ENCODE measurements at regions of chr14 and their contacts with region 1.

Region 1: DNA sequence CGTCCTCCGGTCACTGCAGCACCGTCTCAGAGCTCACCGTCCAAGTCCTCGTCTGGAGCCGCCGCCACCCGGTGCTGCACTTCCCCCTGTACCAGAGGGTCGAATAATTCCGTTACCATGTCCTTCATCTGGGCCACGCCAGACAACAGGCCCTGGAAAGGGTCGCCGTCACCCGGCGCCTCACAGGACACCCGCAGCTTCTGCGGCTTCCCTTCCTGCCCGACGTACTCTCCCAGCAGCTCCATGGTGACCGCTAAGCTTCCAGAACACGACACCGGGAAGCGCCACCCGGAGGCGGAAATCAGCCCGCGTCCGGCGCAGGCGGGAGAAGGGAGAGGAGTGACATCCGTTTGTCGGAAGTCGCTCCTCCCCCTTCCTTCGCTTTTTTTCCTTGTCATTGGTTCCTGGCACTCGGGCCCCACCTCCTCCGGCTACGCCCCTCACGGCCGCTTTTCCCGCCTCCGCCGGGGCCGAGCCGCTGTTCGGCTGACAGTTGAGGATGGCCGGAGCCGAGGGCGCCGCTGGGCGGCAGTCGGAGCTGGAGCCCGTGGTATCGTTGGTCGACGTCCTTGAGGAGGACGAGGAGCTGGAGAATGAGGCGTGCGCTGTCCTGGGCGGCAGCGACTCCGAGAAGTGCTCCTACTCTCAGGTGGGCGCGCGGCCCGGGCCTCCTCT is at the starts of genes GON7 and UBR7:
- DNase-seq: peak; percentile 89
- H3K4me3 ChIP-seq: peak within 1 kb of the TSS; percentile 88
- H3K27ac ChIP-seq: peak within 1 kb of the TSS; percentile 39
- H3K27me3 ChIP-seq: no peaks in the 10 kb centered on the region
- CTCF ChIP-seq: peak; percentile 41
- polyA plus RNA-seq, gene GON7: 7.5 and 8.2 TPM in 2 replicates
- polyA plus RNA-seq, gene UBR7: 25.4 and 30.7 TPM in 2 replicates

Region 2: DNA sequence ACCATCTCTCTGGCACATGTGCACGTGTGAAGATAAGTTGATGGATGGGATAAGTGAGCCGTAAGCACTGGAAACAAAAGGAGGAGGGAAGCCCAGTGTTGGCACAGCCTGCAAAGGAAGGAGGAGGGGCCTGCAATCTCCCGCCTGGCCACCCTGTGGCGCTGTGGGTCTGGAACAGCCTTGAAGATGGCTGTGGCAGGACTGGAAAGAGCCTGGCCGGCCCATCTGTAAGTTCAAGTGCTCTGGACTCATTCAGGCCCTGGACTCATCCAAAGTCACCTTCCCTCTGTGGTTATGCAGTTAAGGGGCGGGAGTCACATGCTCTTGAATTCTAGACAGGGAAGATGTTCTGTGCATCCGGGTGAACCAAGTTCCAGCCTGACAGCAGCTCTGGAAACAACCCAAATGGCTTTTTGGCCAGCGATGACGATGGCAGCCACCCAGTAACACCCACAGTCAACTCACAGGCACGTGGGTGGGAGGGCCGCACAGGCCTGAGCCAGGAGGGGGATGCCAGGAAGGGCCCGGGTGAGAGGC is 233.6 kb before region 1 on chr14:
- CTCF ChIA-PET with region 1: no interaction called
- POLR2A ChIA-PET with region 1: no interaction called
- DNase-seq: no peak
- H3K4me3 ChIP-seq: no peak overlapping the region
- H3K27ac ChIP-seq: no peak overlapping the region
- H3K27me3 ChIP-seq: no peaks in the 10 kb centered on the region
- CTCF ChIP-seq: peak; percentile 64

Region 3: GRCh38 chr14:93184388-93185353 is 22.3 kb before region 1 on chr14 and contains the starts of genes LYSET and MOAP1:
- CTCF ChIA-PET with region 1: interaction called, 10 read pairs
- POLR2A ChIA-PET with region 1: interaction called, 12 read pairs
- DNase-seq: peak; percentile 36
- H3K4me3 ChIP-seq: peak within 1 kb of the TSS; percentile 98
- H3K27ac ChIP-seq: peak within 1 kb of the TSS; percentile 69
- H3K27me3 ChIP-seq: no peaks in the 10 kb centered on the region
- CTCF ChIP-seq: no peak
- polyA plus RNA-seq, gene LYSET: 12.2 and 15.6 TPM in 2 replicates
- polyA plus RNA-seq, gene MOAP1: 16.7 and 21.0 TPM in 2 replicates

Region 4: DNA sequence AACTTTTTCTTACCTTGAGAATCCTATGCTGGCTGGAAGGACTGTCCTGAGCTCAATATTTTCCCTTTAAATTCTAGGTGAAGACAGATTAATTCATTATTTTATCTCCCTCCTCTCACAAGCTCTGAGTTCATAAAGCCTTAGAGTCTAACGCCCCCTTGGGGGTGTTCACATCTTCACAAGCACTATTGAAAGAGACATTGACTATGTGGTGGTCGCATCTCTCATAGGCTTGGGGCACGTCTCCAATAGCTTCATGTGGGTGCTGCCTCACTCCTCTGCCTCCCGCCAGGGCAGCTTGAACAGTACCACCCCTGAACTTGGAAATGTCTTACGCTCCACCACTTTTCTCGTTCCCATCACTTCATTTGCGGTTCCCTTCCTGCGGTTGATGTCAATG is 330.0 kb after region 1 on chr14:
- CTCF ChIA-PET with region 1: interaction called, 10 read pairs
- POLR2A ChIA-PET with region 1: no interaction called
- DNase-seq: no peak
- H3K4me3 ChIP-seq: no peak overlapping the region
- H3K27ac ChIP-seq: no peak overlapping the region
- H3K27me3 ChIP-seq: no peaks in the 10 kb centered on the region
- CTCF ChIP-seq: 0 out of 2 replicates have a peak, but pooled peaks have one; percentile 10

Region 5: DNA sequence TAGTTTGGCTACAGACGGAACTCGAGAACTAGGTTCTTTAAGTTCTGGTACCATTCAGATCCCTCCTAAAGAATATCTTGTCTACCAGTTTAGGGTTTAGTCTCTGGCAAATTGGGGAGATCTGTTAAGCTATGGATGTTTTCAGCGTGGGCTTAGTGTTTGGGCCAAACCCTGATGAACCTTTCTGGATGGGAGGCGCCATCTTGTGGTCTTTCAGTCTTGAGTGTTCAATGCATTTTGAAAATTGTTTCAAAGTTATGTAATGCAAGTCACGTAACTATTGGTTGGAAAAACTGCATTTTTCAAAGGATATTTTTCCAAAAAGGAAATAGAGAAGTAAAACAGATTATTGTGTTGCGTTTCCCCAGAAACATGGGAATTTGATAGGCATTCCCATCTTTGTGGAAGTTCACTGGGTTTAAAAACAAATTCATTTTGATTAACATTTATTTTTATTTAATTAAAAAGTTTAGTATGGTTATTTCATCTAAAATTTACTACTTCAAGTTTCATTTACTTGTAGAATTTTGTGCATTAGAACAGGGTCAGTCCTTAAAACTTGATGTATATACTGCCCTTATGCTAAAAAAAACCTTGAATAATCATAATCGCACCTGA is 412.4 kb after region 1 on chr14:
- CTCF ChIA-PET with region 1: interaction called, 16 read pairs
- POLR2A ChIA-PET with region 1: no interaction called
- DNase-seq: no peak
- H3K4me3 ChIP-seq: no peak overlapping the region
- H3K27ac ChIP-seq: no peak overlapping the region
- H3K27me3 ChIP-seq: no peaks in the 10 kb centered on the region
- CTCF ChIP-seq: peak; percentile 60